ENCODE measurements at regions of chr1 and their contacts with region 1.

Region 1: DNA sequence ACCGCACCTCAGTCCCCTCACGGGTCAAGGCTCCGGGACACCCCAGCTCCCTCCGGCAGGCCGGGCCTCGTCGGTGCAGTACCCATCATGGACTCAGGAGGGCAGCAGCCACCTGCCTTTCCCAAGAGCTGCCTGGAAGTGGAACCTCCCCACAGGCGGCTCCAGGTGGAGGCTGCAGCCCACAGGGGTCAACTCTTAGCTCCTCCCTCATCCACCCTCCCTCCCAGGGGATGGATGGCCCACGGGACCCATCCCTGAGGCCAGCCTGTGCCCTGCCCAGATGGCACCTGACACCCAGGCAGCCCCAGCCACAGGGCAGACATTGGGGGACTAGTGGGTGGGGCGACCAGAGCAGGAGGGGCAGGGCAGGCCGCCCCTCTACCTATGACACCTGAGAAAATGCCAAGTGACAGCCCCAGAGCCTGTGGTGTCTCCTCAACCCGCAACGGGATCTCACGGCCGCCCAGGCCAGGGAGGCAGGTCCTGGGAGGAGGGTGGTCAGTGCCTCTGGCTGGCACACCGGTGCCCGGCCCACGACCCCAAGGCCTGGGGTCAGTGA is 1.2 kb upstream of the ARHGEF16 start:
- DNase-seq: peak; percentile 90
- ATAC-seq: peak; percentile 62
- H3K4me3 ChIP-seq: no peak overlapping the region
- H3K27ac ChIP-seq: no peak overlapping the region
- H3K4me1 ChIP-seq: peaks cover 16% of the 10 kb centered on the region
- H3K27me3 ChIP-seq: peaks cover 17% of the 10 kb centered on the region; the same call in 1 of the 2 replicates
- CTCF ChIP-seq: peak; percentile 97

Region 2: DNA sequence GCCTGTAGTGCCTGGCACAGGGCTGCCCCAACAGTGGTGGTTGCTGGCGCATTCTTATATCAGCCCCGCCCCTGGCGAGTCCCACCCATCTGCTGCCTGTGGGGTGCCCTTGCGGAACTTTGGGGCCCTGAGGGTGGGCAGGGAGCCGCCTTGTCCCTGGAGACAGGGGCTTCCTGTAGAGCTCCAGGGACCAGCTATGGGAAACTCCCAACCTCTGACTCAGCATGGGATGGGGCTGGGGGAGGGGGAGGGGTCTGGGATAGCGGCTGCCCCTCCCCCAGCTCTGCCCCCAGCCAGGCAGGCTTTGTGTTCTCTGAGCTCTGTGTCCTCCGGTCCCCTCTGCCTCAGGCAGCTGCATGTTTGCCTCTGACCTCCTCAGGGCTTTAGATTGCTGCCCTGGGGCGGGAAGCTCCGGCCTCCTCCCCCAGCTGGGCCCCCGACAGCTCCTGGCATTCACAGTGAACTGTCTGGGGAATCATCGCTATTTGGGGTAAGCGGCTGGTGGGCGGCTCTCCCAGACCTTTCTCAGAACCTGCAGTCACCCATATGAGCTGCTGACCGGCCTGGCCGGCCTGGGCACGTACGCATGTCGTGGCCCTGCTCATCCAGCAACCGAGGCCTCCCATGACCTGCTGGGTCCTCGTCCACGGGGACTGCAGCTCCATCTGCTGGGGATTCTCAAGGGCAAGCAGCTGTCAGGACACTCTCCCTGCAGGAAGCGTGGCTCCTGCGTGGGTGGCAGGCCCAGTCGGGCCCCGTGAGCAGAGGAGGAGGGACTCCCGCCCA is 18.2 kb after region 1 on chr1:
- CTCF ChIA-PET with region 1: interaction called, 15 read pairs
- POLR2A ChIA-PET with region 1: no interaction called
- intact Hi-C with region 1: no loop called
- DNase-seq: no peak
- ATAC-seq: peak; percentile 23
- H3K4me3 ChIP-seq: no peak overlapping the region
- H3K27ac ChIP-seq: no peak overlapping the region
- H3K4me1 ChIP-seq: no peaks in the 10 kb centered on the region; the same call in 1 of the 2 replicates
- H3K27me3 ChIP-seq: no peaks in the 10 kb centered on the region
- CTCF ChIP-seq: peak; percentile 46

Region 3: DNA sequence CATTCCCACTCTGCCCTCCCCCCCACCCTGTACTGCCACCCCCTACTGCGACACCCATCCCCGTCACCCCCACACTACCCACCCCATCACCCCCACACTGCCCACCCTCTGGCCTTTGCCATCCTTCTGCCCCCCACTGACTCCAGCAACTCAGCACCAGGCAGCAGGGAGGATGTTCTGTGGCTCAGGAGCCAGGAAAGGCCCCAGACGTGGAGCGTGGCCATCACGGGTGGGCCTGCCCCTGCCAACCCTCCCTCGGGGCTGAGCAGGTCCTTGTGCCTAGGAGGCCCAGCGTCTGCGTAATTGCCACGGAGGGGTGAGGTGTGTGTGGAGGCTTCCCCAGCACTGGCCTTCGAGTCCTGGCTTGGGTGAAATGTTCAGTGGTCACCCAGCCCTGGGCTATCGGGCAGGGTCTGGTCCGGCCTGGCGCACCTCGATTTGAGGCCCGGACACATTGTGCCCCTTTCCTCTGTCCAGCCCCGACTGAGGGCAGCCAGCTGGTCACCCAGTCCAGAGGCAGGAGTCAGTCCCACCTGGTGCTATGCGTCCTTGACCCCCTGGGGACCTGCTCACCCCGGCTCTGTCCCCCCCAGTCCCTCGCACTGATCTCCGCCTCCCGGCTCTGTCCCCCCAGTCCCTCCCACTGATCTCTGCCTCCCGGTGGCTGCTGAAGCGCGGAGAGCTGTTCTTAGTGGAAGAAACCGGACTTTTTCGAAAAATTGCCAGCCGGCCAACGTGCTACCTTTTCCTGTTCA is 24.1 kb after region 1 on chr1:
- CTCF ChIA-PET with region 1: interaction called, 25 read pairs
- POLR2A ChIA-PET with region 1: no interaction called
- intact Hi-C with region 1: no loop called
- DNase-seq: peak; percentile 23
- ATAC-seq: no peak
- H3K4me3 ChIP-seq: no peak overlapping the region
- H3K27ac ChIP-seq: no peak overlapping the region
- H3K4me1 ChIP-seq: peaks cover 7% of the 10 kb centered on the region
- H3K27me3 ChIP-seq: no peaks in the 10 kb centered on the region
- CTCF ChIP-seq: no peak

Region 4: GRCh38 chr1:3483801-3484444 is 30.6 kb after region 1 on chr1:
- CTCF ChIA-PET with region 1: interaction called, 27 read pairs
- POLR2A ChIA-PET with region 1: no interaction called
- intact Hi-C with region 1: loop called (anchors 1 kb)
- DNase-seq: peak; percentile 69
- ATAC-seq: peak; percentile 39
- H3K4me3 ChIP-seq: no peak overlapping the region
- H3K27ac ChIP-seq: no peak overlapping the region
- H3K4me1 ChIP-seq: peaks cover 12% of the 10 kb centered on the region
- H3K27me3 ChIP-seq: no peaks in the 10 kb centered on the region
- CTCF ChIP-seq: peak; percentile 98

Region 5: DNA sequence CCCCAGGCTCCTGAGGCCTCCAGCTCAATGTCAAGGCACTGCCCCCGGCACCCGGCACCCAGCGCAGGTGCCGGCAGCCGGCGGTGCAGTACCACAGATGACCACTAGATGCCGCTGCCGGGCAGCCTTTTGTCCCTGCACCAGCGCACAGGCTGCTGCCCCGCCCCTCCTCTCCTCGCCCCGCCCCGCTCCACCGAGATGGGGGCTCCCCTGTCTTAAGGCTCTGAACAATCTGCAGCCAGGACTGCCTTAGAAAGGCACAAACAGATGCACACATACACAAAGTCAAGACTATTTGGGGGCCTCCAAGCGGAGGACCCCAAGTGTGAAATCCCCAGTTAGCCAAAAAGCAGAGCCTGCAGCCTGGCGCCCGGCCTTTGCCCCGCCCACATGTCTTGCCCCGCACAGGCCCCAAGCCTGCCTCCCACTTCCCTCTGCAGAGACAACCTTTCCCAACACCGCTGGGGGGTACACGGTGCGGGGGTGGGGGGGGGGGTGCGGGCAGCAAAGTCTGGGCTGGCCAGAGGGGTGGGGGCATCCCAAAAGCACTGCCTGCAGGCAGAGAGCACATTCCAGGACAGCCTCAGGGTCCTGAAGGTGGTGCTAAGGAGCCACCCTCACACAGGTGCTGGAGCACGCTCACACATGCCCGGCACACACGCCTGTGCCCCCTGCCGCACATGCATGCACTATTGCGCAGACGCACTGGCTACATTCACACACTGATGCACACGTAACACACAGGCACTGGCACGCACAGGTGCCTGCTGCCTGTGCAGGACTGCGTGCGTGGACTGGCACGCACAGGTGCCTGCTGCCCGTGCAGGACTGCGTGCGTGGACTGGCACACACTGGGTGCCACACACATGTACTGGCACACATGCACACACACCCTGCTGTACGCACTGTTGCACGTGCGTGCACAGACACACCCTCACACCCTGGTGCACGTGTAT is 38.3 kb after region 1 on chr1:
- CTCF ChIA-PET with region 1: interaction called, 27 read pairs
- POLR2A ChIA-PET with region 1: no interaction called
- intact Hi-C with region 1: no loop called
- DNase-seq: peak; percentile 90
- ATAC-seq: peak; percentile 61
- H3K4me3 ChIP-seq: peak overlapping the region; percentile 33; the same call in 1 of the 2 replicates
- H3K27ac ChIP-seq: no peak overlapping the region
- H3K4me1 ChIP-seq: peaks cover 27% of the 10 kb centered on the region
- H3K27me3 ChIP-seq: no peaks in the 10 kb centered on the region
- CTCF ChIP-seq: peak; percentile 98

Region 6: GRCh38 chr1:3548156-3548893 is 95.0 kb after region 1 on chr1:
- CTCF ChIA-PET with region 1: no interaction called
- POLR2A ChIA-PET with region 1: no interaction called
- intact Hi-C with region 1: no loop called
- DNase-seq: no peak
- ATAC-seq: no peak
- H3K4me3 ChIP-seq: no peak overlapping the region
- H3K27ac ChIP-seq: no peak overlapping the region
- H3K4me1 ChIP-seq: peaks cover 23% of the 10 kb centered on the region
- H3K27me3 ChIP-seq: no peaks in the 10 kb centered on the region
- CTCF ChIP-seq: no peak

Region 7: DNA sequence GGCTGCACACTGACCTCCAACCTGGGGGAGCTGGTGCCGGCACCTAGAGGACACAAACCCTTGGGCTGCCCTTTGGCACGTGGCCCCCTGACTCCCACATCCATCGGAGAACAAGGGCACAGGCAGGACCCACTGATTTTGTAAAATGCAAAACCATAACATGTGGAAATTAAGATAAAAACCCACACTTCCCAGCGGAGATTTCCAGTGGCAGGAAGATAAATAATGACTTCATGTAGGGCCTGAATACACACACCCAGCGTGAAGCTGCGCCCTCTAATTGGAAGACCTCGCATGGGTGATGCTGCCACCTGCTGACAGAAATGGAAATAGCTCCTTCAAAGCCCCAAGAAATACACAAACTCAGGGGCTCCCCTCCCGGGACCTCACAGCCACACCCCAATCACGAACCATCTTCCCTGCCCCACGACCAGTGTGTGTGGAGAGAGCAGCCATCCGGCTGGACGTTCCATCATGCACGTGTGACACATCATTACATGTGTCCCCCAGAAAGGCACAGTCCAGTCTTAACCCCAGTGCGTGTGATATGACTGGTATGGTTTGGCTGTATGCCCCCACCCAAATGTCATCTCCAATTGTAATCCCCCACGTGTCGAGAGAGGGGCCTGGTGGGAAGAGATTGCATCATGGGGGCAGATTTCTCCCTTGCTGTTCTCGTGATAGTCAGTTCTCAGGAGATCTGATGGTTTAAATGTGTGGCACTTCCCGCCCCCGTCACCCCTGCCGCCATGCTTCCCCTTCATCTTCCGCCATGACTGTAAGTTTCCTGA is 165.8 kb after region 1 on chr1:
- CTCF ChIA-PET with region 1: interaction called, 31 read pairs
- POLR2A ChIA-PET with region 1: no interaction called
- intact Hi-C with region 1: loop called (anchors 1 kb)
- DNase-seq: peak; percentile 91
- ATAC-seq: peak; percentile 75
- H3K4me3 ChIP-seq: no peak overlapping the region
- H3K27ac ChIP-seq: no peak overlapping the region
- H3K4me1 ChIP-seq: peaks cover 26% of the 10 kb centered on the region
- H3K27me3 ChIP-seq: no peaks in the 10 kb centered on the region
- CTCF ChIP-seq: peak; percentile 95

Region 8: GRCh38 chr1:3727042-3727824 is 274.0 kb after region 1 on chr1:
- CTCF ChIA-PET with region 1: interaction called, 3 read pairs
- POLR2A ChIA-PET with region 1: no interaction called
- intact Hi-C with region 1: loop called (anchors 1 kb)
- DNase-seq: peak; percentile 48
- ATAC-seq: peak; percentile 25; the same call in 1 of the 2 replicates
- H3K4me3 ChIP-seq: no peak overlapping the region
- H3K27ac ChIP-seq: no peak overlapping the region
- H3K4me1 ChIP-seq: no peaks in the 10 kb centered on the region
- H3K27me3 ChIP-seq: peaks cover 6% of the 10 kb centered on the region; the same call in 1 of the 2 replicates
- CTCF ChIP-seq: peak; percentile 64

Measured in PC-3 (cell line).